CD4-positive, alpha-beta T cell (primary cell): ENCODE measurements at regions of chr15 and their contacts with region 1.

Region 1: DNA sequence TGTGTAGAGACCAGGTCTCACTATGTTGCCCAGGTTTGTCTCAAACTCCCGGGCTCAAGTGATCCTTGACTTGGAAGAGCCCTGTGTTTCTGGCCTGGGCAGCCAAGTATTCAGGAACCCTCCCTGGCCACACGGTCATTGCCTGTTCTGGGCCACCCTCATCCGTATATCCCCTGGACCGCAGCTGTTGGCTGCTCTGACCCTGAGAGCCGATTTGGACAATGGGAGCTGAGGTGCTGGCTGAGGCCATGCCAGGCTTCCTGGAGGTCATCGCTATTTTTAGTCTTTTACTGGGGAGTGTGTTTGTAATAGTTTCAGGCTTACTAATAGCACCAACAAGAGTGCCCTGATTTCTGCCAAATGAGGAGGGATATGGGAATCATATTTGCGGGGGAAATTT is 60.7 kb downstream of the ADAMTS7 start:
- DNase-seq: no peak
- ATAC-seq: no peak
- H3K4me3 ChIP-seq: no peak overlapping the region
- H3K4me3 Mint-ChIP-seq: peak overlapping the region; percentile 7
- H3K27ac ChIP-seq: no peak overlapping the region
- H3K27ac Mint-ChIP-seq: no peak overlapping the region
- H3K4me1 ChIP-seq: peaks cover 10% of the 10 kb centered on the region
- H3K4me1 Mint-ChIP-seq: peaks cover 9% of the 10 kb centered on the region
- H3K27me3 ChIP-seq: no peaks in the 10 kb centered on the region
- H3K27me3 Mint-ChIP-seq: no peaks in the 10 kb centered on the region
- CTCF ChIP-seq: no peak

Region 2: DNA sequence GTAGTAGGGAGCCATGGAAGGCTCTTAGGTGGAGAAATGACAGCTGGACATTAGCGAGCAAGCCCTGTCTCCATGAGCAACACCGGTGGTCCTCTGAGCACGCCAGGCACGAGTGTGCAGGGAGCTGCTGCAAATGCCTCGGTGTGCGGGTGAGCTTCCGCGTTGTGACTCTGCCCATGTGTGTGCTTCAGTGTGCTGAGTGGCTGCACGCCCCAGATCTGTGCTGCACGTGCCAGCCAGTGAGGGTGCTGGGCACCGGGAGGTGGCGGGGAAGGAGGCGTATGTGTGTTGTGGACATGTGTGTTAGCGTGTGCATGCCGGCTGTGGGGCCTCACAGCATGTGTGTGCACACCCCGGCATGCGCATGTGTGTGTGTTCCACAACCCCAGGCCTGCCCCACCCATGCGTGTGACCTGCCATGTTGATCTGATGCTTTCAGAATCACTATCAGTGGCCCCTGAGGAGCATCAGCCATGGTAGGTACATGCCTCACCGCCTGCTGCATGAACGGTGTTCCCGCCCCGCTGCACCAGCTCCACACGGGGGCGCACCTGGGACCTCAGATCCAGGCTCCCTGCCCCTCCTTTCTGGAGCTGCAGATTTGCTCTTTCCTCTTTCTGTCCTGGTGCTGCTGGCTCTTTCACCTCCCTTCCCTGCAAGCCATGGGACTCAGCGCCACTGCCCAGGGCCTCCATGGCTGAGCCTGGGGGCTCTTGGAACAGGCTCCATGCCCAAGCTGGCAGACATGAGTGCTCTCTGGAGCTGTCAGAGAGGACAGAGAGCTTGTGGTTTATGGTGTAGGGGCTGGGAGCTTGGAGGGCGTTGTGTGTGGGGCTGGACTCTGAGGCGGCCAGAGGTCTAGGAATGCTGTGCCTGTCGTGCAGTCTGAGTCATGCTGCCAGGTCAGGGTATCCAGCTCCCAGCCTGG is 842.5 kb before region 1 on chr15:
- CTCF ChIA-PET with region 1: no interaction called
- POLR2A ChIA-PET with region 1: no interaction called
- intact Hi-C with region 1: loop called in 1 of 2 experiments (anchors 5 kb)
- DNase-seq: peak in 12 of 14 experiments; percentile 10 to 70 (median 34)
- ATAC-seq: peak; percentile 57
- H3K4me3 ChIP-seq: no peak overlapping the region
- H3K4me3 Mint-ChIP-seq: no peak overlapping the region
- H3K27ac ChIP-seq: no peak overlapping the region
- H3K27ac Mint-ChIP-seq: no peak overlapping the region
- H3K4me1 ChIP-seq: peaks cover 3% of the 10 kb centered on the region
- H3K4me1 Mint-ChIP-seq: no peaks in the 10 kb centered on the region
- H3K27me3 ChIP-seq: no peaks in the 10 kb centered on the region
- H3K27me3 Mint-ChIP-seq: peaks cover 7% of the 10 kb centered on the region
- CTCF ChIP-seq: peak; percentile 29

Region 3: GRCh38 chr15:78618490-78618934 is 132.1 kb before region 1 on chr15:
- CTCF ChIA-PET with region 1: no interaction called
- POLR2A ChIA-PET with region 1: no interaction called
- intact Hi-C with region 1: loop called (anchors 1 kb)
- DNase-seq: peak; percentile 55 to 86 (median 74)
- ATAC-seq: peak; percentile 32
- H3K4me3 ChIP-seq: no peak overlapping the region
- H3K4me3 Mint-ChIP-seq: no peak overlapping the region
- H3K27ac ChIP-seq: no peak overlapping the region
- H3K27ac Mint-ChIP-seq: no peak overlapping the region
- H3K4me1 ChIP-seq: peaks cover 11% of the 10 kb centered on the region
- H3K4me1 Mint-ChIP-seq: peaks cover 18% of the 10 kb centered on the region
- H3K27me3 ChIP-seq: peaks cover 24 to 37% of the 10 kb centered on the region in 2 experiments
- H3K27me3 Mint-ChIP-seq: peaks cover 45% of the 10 kb centered on the region
- CTCF ChIP-seq: peak; percentile 74